ENCODE measurements at regions of chr9 and their contacts with region 1.

Region 1: DNA sequence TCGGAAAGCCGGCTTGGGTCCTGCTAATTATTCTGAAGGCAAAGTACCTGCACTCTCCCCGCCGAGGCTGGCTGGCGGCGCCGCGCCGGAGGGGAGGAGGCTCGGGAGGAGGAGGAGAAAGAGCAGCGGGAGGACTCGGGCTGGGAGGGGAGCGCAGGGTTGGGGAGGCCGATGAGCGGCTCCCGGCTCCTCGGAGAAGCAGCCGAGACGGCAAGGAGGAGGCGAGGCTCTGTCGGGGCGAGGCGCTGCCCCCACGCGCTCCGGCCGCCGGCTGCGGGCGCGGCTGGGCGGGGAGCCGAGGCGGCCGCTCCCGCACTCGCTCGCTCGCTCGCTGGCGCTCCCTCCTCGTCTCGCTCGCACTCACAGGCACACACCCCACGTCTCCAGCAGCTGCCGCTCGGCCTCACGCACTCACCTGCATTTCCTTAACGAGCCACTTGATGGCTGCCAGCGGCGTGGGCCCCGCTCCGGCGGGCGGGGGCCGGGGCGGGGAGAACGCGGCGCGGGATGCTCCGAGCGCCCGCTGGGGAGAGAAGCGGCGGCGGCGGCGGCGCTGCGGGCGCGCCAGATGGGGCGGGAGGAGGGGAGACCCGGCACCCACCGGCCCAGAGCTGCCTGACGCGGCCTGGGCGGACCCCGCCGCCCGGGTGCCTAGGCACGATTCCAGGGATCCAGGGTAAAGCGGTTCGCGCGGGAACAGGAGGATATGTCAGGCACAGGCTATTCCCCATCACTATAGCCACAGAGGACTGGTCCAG is at the start of gene PTPRD:
- DNase-seq: peak; percentile 56
- H3K4me3 ChIP-seq: peak within 1 kb of the TSS; percentile 48 to 57 (median 56)
- H3K27ac ChIP-seq: no peak within 1 kb of the TSS
- H3K4me1 ChIP-seq: peaks cover 11% of the 10 kb centered on the region
- H3K27me3 ChIP-seq: peaks cover 17% of the 10 kb centered on the region
- CTCF ChIP-seq: peak; percentile 18 to 50
- total RNA-seq, gene PTPRD: 0.33 to 0.50 TPM

Region 2: DNA sequence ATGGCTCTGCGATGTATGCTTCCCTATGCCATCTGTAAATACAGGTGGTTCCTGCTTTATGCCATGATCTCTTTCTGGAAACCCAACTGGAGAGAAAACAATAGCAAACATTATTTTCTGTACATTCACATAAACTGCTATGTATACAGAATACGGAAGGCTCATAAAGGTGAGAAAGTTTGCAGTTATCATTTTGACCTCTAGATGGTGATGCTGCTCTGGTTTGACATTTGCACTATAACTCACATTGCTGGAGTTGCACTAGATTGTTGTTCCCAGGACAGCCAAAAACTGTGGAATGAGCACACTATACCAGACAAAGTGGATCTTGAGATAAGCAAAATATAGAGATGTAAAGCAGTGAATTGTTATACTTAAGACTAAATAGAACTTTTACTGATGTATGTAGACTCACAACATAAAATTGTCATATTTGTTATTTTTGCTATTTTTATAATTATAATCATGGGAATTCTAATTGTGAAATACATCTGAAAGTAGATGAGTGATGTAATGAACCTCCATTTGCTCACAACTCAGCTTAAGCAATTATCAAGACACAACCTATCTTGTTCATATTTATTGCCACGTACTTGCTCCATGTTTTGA is 246.5 kb before region 1 on chr9:
- CTCF ChIA-PET with region 1: no interaction called
- dilution Hi-C with region 1: no loop called
- in situ Hi-C with region 1: no loop called
- intact Hi-C with region 1: loop called (anchors 5 kb)
- DNase-seq: peak; percentile 29
- H3K4me3 ChIP-seq: no peak overlapping the region
- H3K27ac ChIP-seq: no peak overlapping the region
- H3K4me1 ChIP-seq: no peaks in the 10 kb centered on the region
- H3K27me3 ChIP-seq: no peaks in the 10 kb centered on the region
- CTCF ChIP-seq: peak; percentile 82 to 84

Region 3: GRCh38 chr9:10371824-10372223 is 241.0 kb before region 1 on chr9:
- CTCF ChIA-PET with region 1: interaction called, 23 read pairs
- dilution Hi-C with region 1: no loop called
- in situ Hi-C with region 1: no loop called
- intact Hi-C with region 1: loop called (anchors 5 kb)
- DNase-seq: no peak
- H3K4me3 ChIP-seq: no peak overlapping the region
- H3K27ac ChIP-seq: no peak overlapping the region
- H3K4me1 ChIP-seq: no peaks in the 10 kb centered on the region
- H3K27me3 ChIP-seq: no peaks in the 10 kb centered on the region
- CTCF ChIP-seq: no peak

Region 4: DNA sequence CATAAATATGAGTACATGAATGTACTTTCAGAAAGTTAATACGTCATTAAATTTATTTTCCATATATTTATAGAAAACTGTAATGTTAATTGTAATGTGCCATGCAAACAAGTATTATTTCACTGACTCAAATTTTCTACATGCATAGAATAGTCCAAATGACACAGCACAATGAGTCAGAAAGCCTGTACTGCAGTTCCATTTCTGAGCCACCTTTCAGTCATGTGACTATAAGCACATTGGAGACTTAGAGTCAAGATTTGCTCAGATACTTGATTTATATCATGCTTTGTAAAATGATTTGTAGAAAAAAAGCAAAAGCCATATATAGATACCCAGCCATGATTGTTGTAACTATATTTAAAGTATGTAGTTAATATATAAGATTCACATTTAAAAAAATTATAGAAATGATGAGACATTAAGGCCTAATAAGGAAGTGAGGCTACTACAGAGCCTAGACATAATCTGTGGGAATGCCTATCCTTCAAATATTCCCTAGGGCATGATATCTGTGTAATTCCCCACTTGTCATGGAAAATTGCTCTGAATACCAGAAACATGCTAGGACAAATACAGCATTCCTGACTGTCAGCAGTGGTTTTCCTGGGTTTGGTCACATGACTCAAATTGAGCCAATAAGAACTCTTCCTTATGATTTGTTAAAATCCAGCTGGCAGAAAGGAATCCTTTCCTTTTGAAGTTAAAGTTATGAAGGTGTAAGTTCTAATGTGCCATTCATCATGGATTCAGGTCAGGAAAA is 50.1 kb before region 1 on chr9:
- CTCF ChIA-PET with region 1: no interaction called
- dilution Hi-C with region 1: no loop called
- in situ Hi-C with region 1: no loop called
- intact Hi-C with region 1: loop called (anchors 5 kb)
- DNase-seq: peak; percentile 88
- H3K4me3 ChIP-seq: no peak overlapping the region
- H3K27ac ChIP-seq: peak overlapping the region; percentile 88
- H3K4me1 ChIP-seq: peaks cover 11% of the 10 kb centered on the region
- H3K27me3 ChIP-seq: no peaks in the 10 kb centered on the region
- CTCF ChIP-seq: no peak

Region 5: GRCh38 chr9:10586407-10586806 is 26.4 kb before region 1 on chr9:
- CTCF ChIA-PET with region 1: no interaction called
- dilution Hi-C with region 1: no loop called
- in situ Hi-C with region 1: no loop called
- intact Hi-C with region 1: loop called (anchors 2 kb)
- DNase-seq: peak; percentile 4
- H3K4me3 ChIP-seq: no peak overlapping the region
- H3K27ac ChIP-seq: no peak overlapping the region
- H3K4me1 ChIP-seq: no peaks in the 10 kb centered on the region
- H3K27me3 ChIP-seq: no peaks in the 10 kb centered on the region
- CTCF ChIP-seq: no peak

Region 6: GRCh38 chr9:11103525-11103924 is 490.7 kb after region 1 on chr9:
- CTCF ChIA-PET with region 1: no interaction called
- dilution Hi-C with region 1: no loop called
- in situ Hi-C with region 1: no loop called
- intact Hi-C with region 1: no loop called
- DNase-seq: no peak
- H3K4me3 ChIP-seq: no peak overlapping the region
- H3K27ac ChIP-seq: no peak overlapping the region
- H3K4me1 ChIP-seq: no peaks in the 10 kb centered on the region
- H3K27me3 ChIP-seq: no peaks in the 10 kb centered on the region
- CTCF ChIP-seq: no peak

Measured in mammary epithelial cell (primary cell).